MCF 10A (cell line): ENCODE measurements at regions of chr7 and their contacts with region 1.

Region 1: DNA sequence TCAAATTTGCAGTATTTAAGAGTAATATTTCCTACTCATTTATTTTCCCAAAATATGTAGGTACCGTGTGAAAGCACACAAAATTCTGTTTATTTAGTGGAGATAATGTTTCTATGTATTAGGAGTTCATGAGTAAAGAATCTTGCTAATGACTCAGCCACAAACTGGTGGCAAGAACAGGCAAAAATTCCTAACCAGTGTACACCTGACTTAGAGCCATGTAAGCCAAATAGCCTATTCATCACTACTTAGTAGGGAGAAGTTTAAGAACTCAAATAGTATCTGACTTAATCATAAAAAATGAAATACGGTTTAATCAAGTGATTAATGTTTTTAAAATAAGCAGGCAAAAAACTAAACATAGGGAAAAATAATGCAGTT is 169.0 kb downstream of the SRPK2 start:
- DNase-seq: peak; percentile 71
- H3K4me3 Mint-ChIP-seq: peak overlapping the region; percentile 50
- H3K27ac Mint-ChIP-seq: peak overlapping the region; percentile 65
- H3K4me1 Mint-ChIP-seq: peaks cover 51% of the 10 kb centered on the region
- H3K27me3 Mint-ChIP-seq: no peaks in the 10 kb centered on the region
- CTCF ChIP-seq: no peak

Region 2: DNA sequence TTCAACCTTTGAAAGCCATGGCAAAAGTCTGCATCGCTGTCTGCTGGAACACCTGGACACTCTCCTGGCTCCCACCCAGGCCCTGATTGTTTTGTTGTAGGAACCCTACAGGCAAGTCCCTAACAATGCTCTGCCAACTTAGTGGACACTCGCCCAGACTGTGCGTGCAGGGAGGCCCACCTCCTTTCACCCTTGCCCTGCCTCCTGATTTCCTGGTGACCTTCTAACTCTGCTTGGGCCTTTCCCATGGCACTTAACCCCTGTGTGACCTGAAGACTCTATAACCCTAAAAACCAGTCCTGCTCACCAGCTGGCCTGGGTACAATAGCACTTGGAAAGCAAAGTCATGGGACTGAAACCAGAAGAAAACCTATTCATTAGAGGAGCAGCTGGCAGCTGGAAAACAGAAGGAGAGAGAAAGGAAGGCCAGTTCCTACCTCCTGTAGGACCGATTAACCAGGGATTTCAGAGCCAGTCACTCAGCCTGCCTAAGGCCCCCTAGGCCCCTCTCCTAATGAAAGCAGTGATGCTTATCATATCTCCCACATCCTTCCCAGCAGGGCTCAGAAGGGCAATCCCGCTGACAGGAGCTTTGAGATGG is 288.5 kb before region 1 on chr7:
- CTCF ChIA-PET with region 1: no interaction called
- POLR2A ChIA-PET with region 1: no interaction called
- intact Hi-C with region 1: no loop called
- DNase-seq: no peak
- H3K4me3 Mint-ChIP-seq: no peak overlapping the region
- H3K27ac Mint-ChIP-seq: no peak overlapping the region
- H3K4me1 Mint-ChIP-seq: no peaks in the 10 kb centered on the region
- H3K27me3 Mint-ChIP-seq: no peaks in the 10 kb centered on the region
- CTCF ChIP-seq: no peak

Region 3: GRCh38 chr7:105149827-105150226 is 69.9 kb before region 1 on chr7:
- CTCF ChIA-PET with region 1: interaction called, 4 read pairs
- POLR2A ChIA-PET with region 1: no interaction called
- intact Hi-C with region 1: loop called (anchors 2 kb)
- DNase-seq: peak; percentile 69
- H3K4me3 Mint-ChIP-seq: no peak overlapping the region
- H3K27ac Mint-ChIP-seq: peak overlapping the region; percentile 87
- H3K4me1 Mint-ChIP-seq: peaks cover 6% of the 10 kb centered on the region
- H3K27me3 Mint-ChIP-seq: no peaks in the 10 kb centered on the region
- CTCF ChIP-seq: no peak